ENCODE measurements at regions of chr7 and their contacts with region 1.

Region 1: GRCh38 chr7:82572195-82572880 is 128.8 kb upstream of the CACNA2D1 start:
- DNase-seq: peak; percentile 20 to 66 (median 40)
- ATAC-seq: no peak
- H3K4me3 ChIP-seq: no peak overlapping the region
- H3K4me3 Mint-ChIP-seq: no peak overlapping the region
- H3K27ac ChIP-seq: no peak overlapping the region
- H3K27ac Mint-ChIP-seq: no peak overlapping the region
- H3K4me1 ChIP-seq: no peaks in the 10 kb centered on the region
- H3K4me1 Mint-ChIP-seq: no peaks in the 10 kb centered on the region
- H3K27me3 ChIP-seq: no peaks in the 10 kb centered on the region
- H3K27me3 Mint-ChIP-seq: no peaks in the 10 kb centered on the region
- CTCF ChIP-seq: peak; percentile 67

Region 2: GRCh38 chr7:80699045-80699638 is 1873.2 kb before region 1 on chr7:
- CTCF ChIA-PET with region 1: no interaction called
- POLR2A ChIA-PET with region 1: no interaction called
- intact Hi-C with region 1: loop called in 1 of 2 experiments (anchors 10 kb)
- DNase-seq: peak in 3 of 14 experiments; percentile 16 to 31 (median 26)
- ATAC-seq: no peak
- H3K4me3 ChIP-seq: no peak overlapping the region
- H3K4me3 Mint-ChIP-seq: no peak overlapping the region
- H3K27ac ChIP-seq: no peak overlapping the region
- H3K27ac Mint-ChIP-seq: no peak overlapping the region
- H3K4me1 ChIP-seq: no peaks in the 10 kb centered on the region
- H3K4me1 Mint-ChIP-seq: no peaks in the 10 kb centered on the region
- H3K27me3 ChIP-seq: no peaks in the 10 kb centered on the region
- H3K27me3 Mint-ChIP-seq: no peaks in the 10 kb centered on the region
- CTCF ChIP-seq: peak; percentile 65

Region 3: GRCh38 chr7:81482600-81483186 is 1089.6 kb before region 1 on chr7:
- CTCF ChIA-PET with region 1: no interaction called
- POLR2A ChIA-PET with region 1: no interaction called
- intact Hi-C with region 1: loop called (anchors 5 kb)
- DNase-seq: peak in 1 of 14 experiments; percentile 17
- ATAC-seq: no peak
- H3K4me3 ChIP-seq: no peak overlapping the region
- H3K4me3 Mint-ChIP-seq: no peak overlapping the region
- H3K27ac ChIP-seq: no peak overlapping the region
- H3K27ac Mint-ChIP-seq: no peak overlapping the region
- H3K4me1 ChIP-seq: no peaks in the 10 kb centered on the region
- H3K4me1 Mint-ChIP-seq: no peaks in the 10 kb centered on the region
- H3K27me3 ChIP-seq: no peaks in the 10 kb centered on the region
- H3K27me3 Mint-ChIP-seq: no peaks in the 10 kb centered on the region
- CTCF ChIP-seq: peak; percentile 73

Region 4: DNA sequence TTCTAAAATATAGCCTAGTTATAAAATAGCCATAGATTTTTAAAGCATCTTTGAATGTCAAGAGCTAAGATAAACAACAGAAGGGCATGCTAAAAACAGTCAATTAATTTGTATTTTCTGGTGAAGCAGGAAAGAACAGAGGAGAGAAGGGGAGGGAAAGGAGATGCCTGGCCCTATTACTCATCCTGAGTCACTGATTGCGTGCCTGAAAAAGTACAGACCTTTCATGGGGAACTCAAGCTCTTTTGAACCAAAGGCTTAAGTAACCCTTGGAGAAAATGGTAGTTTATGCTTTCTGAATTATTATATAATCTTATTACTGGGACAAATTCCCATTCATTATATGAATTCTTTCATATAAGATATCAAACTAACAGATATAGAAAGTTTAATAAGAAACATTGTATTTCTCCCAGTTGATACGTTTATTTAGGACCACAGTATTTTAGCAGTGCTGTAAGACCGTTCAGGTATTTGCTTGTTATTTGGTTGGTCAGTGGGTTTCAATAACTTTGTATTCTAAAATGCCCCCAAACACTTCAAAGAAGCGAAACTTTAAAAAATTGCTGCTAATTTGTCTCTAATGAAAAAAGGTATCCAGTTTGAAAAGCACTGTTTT is 953.8 kb before region 1 on chr7:
- CTCF ChIA-PET with region 1: no interaction called
- POLR2A ChIA-PET with region 1: no interaction called
- intact Hi-C with region 1: no loop called
- DNase-seq: no peak
- ATAC-seq: no peak
- H3K4me3 ChIP-seq: no peak overlapping the region
- H3K4me3 Mint-ChIP-seq: no peak overlapping the region
- H3K27ac ChIP-seq: no peak overlapping the region
- H3K27ac Mint-ChIP-seq: no peak overlapping the region
- H3K4me1 ChIP-seq: no peaks in the 10 kb centered on the region
- H3K4me1 Mint-ChIP-seq: no peaks in the 10 kb centered on the region
- H3K27me3 ChIP-seq: no peaks in the 10 kb centered on the region
- H3K27me3 Mint-ChIP-seq: no peaks in the 10 kb centered on the region
- CTCF ChIP-seq: no peak

Region 5: DNA sequence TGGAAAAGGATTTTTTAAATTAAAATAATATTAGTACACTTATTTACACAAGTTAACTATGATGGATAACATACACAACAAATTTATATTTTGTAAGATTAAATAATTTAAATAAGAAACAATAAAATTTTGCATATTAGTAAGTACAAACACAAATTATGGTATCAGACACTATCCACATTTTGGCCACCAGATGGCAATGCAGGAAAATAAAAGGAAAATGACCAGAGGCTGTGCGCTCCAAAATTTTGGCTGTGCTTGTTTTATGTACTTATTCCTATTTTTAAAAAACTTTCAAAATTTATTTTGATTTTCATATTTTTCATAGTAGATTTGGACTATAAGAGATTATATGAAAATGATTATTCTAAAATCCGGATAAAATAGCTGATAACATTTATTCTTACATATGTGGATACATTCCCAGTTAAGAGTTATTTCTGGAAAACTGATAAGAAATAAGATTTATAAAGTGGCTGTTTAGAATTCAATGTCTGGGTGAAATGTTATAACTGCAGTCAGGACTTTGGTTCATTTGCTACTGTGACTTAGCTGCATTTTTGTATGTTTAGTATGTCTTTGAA is 527.7 kb before region 1 on chr7:
- CTCF ChIA-PET with region 1: no interaction called
- POLR2A ChIA-PET with region 1: no interaction called
- intact Hi-C with region 1: loop called in 1 of 2 experiments (anchors 10 kb)
- DNase-seq: peak in 3 of 14 experiments; percentile 5 to 11 (median 10)
- ATAC-seq: no peak
- H3K4me3 ChIP-seq: no peak overlapping the region
- H3K4me3 Mint-ChIP-seq: no peak overlapping the region
- H3K27ac ChIP-seq: no peak overlapping the region
- H3K27ac Mint-ChIP-seq: no peak overlapping the region
- H3K4me1 ChIP-seq: no peaks in the 10 kb centered on the region
- H3K4me1 Mint-ChIP-seq: no peaks in the 10 kb centered on the region
- H3K27me3 ChIP-seq: no peaks in the 10 kb centered on the region
- H3K27me3 Mint-ChIP-seq: no peaks in the 10 kb centered on the region
- CTCF ChIP-seq: no peak

Region 6: GRCh38 chr7:82373926-82374640 is 198.3 kb before region 1 on chr7:
- CTCF ChIA-PET with region 1: no interaction called
- POLR2A ChIA-PET with region 1: no interaction called
- intact Hi-C with region 1: no loop called
- DNase-seq: no peak
- ATAC-seq: no peak
- H3K4me3 ChIP-seq: no peak overlapping the region
- H3K4me3 Mint-ChIP-seq: no peak overlapping the region
- H3K27ac ChIP-seq: no peak overlapping the region
- H3K27ac Mint-ChIP-seq: no peak overlapping the region
- H3K4me1 ChIP-seq: no peaks in the 10 kb centered on the region
- H3K4me1 Mint-ChIP-seq: no peaks in the 10 kb centered on the region
- H3K27me3 ChIP-seq: no peaks in the 10 kb centered on the region
- H3K27me3 Mint-ChIP-seq: no peaks in the 10 kb centered on the region
- CTCF ChIP-seq: no peak